CD4-positive, alpha-beta T cell (primary cell): ENCODE measurements at regions of chr1 and their contacts with region 1.

Region 1: DNA sequence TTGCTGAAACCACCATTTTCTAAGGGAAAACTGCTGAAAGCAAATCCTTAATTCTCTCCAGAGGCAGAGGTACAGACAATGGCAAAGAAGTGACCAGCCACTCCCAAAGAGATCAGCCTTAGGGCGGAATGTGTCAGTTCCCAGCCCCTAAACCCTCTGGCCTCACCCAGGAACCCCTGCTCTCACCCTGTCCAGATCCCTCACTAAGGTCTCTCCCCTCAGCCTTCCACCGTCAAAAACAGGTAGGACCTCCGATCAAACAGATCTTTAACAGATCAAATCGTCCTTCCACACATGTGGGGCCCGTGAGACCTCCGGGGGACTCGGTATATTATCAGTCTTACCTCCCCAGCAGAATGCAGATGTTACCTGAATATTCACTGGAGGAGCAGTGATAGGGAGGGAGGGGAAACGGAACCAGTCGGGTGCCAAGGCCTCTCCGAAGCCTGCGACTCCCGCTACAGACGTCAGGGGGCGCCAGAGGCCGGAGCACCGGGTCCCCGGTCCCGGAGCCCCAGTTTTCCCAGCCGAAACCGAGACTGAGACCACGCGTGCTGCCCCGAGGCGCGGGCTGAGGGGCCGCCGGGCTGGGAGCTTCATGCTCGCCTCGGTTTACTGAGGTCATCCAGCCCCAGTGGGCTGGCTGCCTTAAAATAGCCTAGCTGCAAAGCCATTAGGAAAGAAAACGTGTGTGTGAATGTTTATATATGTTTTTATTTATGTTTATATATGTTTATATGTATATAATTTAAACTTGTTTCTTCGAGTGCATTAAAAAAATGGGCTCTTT is 23.6 kb downstream of the GPA33 start:
- DNase-seq: peak; percentile 53 to 89 (median 79)
- ATAC-seq: peak; percentile 98
- H3K4me3 ChIP-seq: peak overlapping the region; percentile 15
- H3K4me3 Mint-ChIP-seq: no peak overlapping the region
- H3K27ac ChIP-seq: no peak overlapping the region
- H3K27ac Mint-ChIP-seq: no peak overlapping the region
- H3K4me1 ChIP-seq: peaks cover 6% of the 10 kb centered on the region
- H3K4me1 Mint-ChIP-seq: no peaks in the 10 kb centered on the region
- H3K27me3 ChIP-seq: no peaks in the 10 kb centered on the region
- H3K27me3 Mint-ChIP-seq: no peaks in the 10 kb centered on the region
- CTCF ChIP-seq: peak; percentile 96

Region 2: GRCh38 chr1:166859597-166859996 is 206.9 kb before region 1 on chr1:
- CTCF ChIA-PET with region 1: no interaction called
- POLR2A ChIA-PET with region 1: no interaction called
- intact Hi-C with region 1: no loop called
- DNase-seq: no peak
- ATAC-seq: no peak
- H3K4me3 ChIP-seq: no peak overlapping the region
- H3K4me3 Mint-ChIP-seq: no peak overlapping the region
- H3K27ac ChIP-seq: no peak overlapping the region
- H3K27ac Mint-ChIP-seq: peak overlapping the region; percentile 12
- H3K4me1 ChIP-seq: no peaks in the 10 kb centered on the region
- H3K4me1 Mint-ChIP-seq: peaks cover 5% of the 10 kb centered on the region
- H3K27me3 ChIP-seq: no peaks in the 10 kb centered on the region
- H3K27me3 Mint-ChIP-seq: no peaks in the 10 kb centered on the region
- CTCF ChIP-seq: no peak

Region 3: GRCh38 chr1:167077868-167078210 is 11.3 kb after region 1 on chr1:
- CTCF ChIA-PET with region 1: no interaction called
- POLR2A ChIA-PET with region 1: no interaction called
- intact Hi-C with region 1: no loop called
- DNase-seq: no peak
- ATAC-seq: no peak
- H3K4me3 ChIP-seq: no peak overlapping the region
- H3K4me3 Mint-ChIP-seq: no peak overlapping the region
- H3K27ac ChIP-seq: no peak overlapping the region
- H3K27ac Mint-ChIP-seq: no peak overlapping the region
- H3K4me1 ChIP-seq: peaks cover 21% of the 10 kb centered on the region
- H3K4me1 Mint-ChIP-seq: peaks cover 17% of the 10 kb centered on the region
- H3K27me3 ChIP-seq: no peaks in the 10 kb centered on the region
- H3K27me3 Mint-ChIP-seq: no peaks in the 10 kb centered on the region
- CTCF ChIP-seq: no peak

Region 4: DNA sequence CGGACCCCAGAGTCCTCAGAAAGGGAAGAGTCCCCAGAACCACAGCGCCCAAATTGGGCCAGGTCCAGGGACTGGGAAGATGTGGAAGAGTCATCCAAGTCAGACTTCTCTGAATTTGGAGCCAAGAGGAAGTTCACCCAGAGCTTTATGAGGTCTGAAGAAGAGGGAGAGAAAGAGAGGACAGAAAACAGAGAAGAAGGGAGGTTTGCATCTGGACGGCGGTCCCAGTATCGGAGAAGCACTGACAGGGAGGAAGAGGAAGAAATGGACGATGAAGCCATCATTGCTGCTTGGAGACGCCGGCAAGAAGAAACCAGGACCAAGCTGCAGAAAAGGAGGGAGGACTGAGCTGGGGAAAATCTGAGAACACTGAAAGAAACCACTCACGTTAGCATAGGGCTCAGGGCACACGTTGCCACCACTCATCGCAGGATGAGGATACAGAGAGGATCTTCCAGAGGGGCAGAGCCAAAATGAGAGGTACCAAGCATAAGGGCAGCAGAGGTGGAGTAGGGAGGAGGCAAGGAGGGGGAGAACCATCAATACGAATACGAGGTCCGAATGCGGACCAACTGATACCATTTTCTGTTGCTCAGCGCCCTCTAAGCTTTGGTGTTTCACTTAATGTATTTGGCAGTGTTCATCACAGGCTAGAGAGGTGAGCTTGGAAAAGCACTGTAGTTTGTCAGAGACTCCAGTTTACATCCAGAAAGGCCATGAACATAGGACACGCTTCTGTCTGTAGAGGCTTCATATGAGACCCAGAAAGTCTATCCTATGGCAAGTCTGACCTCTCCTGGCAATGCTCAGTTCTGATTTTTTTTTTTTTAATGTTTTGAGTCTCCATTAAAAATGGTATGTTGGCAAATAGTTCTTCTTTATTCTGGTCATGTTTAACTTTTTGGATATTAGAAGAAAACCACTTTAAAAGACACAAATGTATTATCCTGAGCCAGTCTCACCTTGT is 62.0 kb after region 1 on chr1:
- CTCF ChIA-PET with region 1: interaction called, 3 read pairs
- POLR2A ChIA-PET with region 1: no interaction called
- intact Hi-C with region 1: loop called in 1 of 2 experiments (anchors 1 kb)
- DNase-seq: peak in 3 of 14 experiments; percentile 11 to 31 (median 30)
- ATAC-seq: peak; percentile 37
- H3K4me3 ChIP-seq: no peak overlapping the region
- H3K4me3 Mint-ChIP-seq: no peak overlapping the region
- H3K27ac ChIP-seq: no peak overlapping the region
- H3K27ac Mint-ChIP-seq: no peak overlapping the region
- H3K4me1 ChIP-seq: no peaks in the 10 kb centered on the region
- H3K4me1 Mint-ChIP-seq: no peaks in the 10 kb centered on the region
- H3K27me3 ChIP-seq: peaks cover 3 to 6% of the 10 kb centered on the region in 2 experiments
- H3K27me3 Mint-ChIP-seq: peaks cover 12% of the 10 kb centered on the region
- CTCF ChIP-seq: peak; percentile 20

Region 5: GRCh38 chr1:167342846-167343245 is 276.3 kb after region 1 on chr1:
- CTCF ChIA-PET with region 1: no interaction called
- POLR2A ChIA-PET with region 1: no interaction called
- intact Hi-C with region 1: loop called in 1 of 2 experiments (anchors 5 kb)
- DNase-seq: peak in 3 of 14 experiments; percentile 17 to 33 (median 28)
- ATAC-seq: no peak
- H3K4me3 ChIP-seq: no peak overlapping the region
- H3K4me3 Mint-ChIP-seq: no peak overlapping the region
- H3K27ac ChIP-seq: no peak overlapping the region
- H3K27ac Mint-ChIP-seq: no peak overlapping the region
- H3K4me1 ChIP-seq: no peaks in the 10 kb centered on the region
- H3K4me1 Mint-ChIP-seq: peaks cover 5% of the 10 kb centered on the region
- H3K27me3 ChIP-seq: no peaks in the 10 kb centered on the region
- H3K27me3 Mint-ChIP-seq: no peaks in the 10 kb centered on the region
- CTCF ChIP-seq: peak; percentile 36

Region 6: GRCh38 chr1:167533851-167534300 is 467.3 kb after region 1 on chr1:
- CTCF ChIA-PET with region 1: no interaction called
- POLR2A ChIA-PET with region 1: no interaction called
- intact Hi-C with region 1: loop called in 1 of 2 experiments (anchors 2 kb)
- DNase-seq: peak in 13 of 14 experiments; percentile 44 to 82 (median 57)
- ATAC-seq: peak; percentile 90
- H3K4me3 ChIP-seq: no peak overlapping the region
- H3K4me3 Mint-ChIP-seq: no peak overlapping the region
- H3K27ac ChIP-seq: no peak overlapping the region
- H3K27ac Mint-ChIP-seq: no peak overlapping the region
- H3K4me1 ChIP-seq: peaks cover 7% of the 10 kb centered on the region
- H3K4me1 Mint-ChIP-seq: no peaks in the 10 kb centered on the region
- H3K27me3 ChIP-seq: no peaks in the 10 kb centered on the region
- H3K27me3 Mint-ChIP-seq: no peaks in the 10 kb centered on the region
- CTCF ChIP-seq: peak; percentile 97